ENCODE measurements at regions of chr2 and their contacts with region 1.

Region 1: GRCh38 chr2:73293534-73294171 is at the start of gene EGR4:
- DNase-seq: peak; percentile 94
- ATAC-seq: peak; percentile 95
- H3K4me3 Mint-ChIP-seq: peak within 1 kb of the TSS; percentile 71
- H3K27ac Mint-ChIP-seq: no peak within 1 kb of the TSS
- H3K4me1 Mint-ChIP-seq: peaks cover 16% of the 10 kb centered on the region
- H3K27me3 Mint-ChIP-seq: peaks cover 88% of the 10 kb centered on the region
- total RNA-seq, gene EGR4: 0.09 to 0.15 TPM

Region 2: GRCh38 chr2:73212448-73213176 is 81.0 kb before region 1 on chr2:
- CTCF ChIA-PET with region 1: interaction called, 23 read pairs
- DNase-seq: peak; percentile 83
- ATAC-seq: peak; percentile 76
- H3K4me3 Mint-ChIP-seq: peak overlapping the region; percentile 89
- H3K27ac Mint-ChIP-seq: no peak overlapping the region
- H3K4me1 Mint-ChIP-seq: peaks cover 30% of the 10 kb centered on the region
- H3K27me3 Mint-ChIP-seq: peaks cover 2% of the 10 kb centered on the region

Region 3: DNA sequence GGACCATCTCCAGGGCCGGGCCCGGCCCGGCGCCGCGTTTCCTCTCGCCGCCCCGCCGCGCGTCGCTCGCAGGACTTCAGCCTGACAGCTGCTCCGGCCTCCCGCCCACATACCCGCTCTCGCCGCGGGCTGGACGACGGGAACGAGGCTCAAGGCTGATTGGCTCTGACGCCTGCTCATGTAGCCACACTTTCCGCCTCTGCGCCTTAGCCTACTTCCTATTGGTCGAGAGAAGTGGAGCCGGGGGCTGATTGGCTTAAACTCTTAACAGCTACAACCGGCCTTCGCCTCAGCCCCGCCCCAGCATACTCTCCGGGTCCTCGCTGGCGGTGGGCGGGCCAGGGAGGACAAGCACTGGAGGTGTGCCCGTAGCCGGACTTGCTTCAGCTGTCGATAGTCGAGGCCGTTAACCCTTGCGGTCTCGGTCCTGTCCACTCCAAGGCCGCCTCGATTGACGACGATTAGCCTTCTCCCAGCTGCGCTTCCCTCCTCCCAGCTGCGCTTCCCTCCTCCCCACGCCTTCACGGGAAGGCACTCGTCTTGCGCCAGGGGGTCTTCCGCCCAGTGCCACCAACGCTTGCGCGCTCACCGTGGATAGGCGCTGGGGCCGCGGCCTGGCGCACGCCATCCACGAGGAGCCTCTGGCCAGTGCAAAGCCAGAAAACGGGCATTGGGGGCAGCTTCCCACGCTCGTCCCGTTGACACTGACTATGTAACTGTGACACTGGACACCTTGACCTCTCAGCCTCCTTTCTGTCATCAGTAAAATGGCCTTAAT is 60.3 kb before region 1 on chr2 and contains the start of gene PRADC1:
- CTCF ChIA-PET with region 1: interaction called, 56 read pairs
- DNase-seq: peak; percentile 99
- ATAC-seq: peak; percentile 91
- H3K4me3 Mint-ChIP-seq: peak within 1 kb of the TSS; percentile 88
- H3K27ac Mint-ChIP-seq: peak within 1 kb of the TSS; percentile 89
- H3K4me1 Mint-ChIP-seq: peaks cover 34% of the 10 kb centered on the region
- H3K27me3 Mint-ChIP-seq: no peaks in the 10 kb centered on the region
- total RNA-seq, gene PRADC1: 13.7 to 14.7 TPM

Region 4: DNA sequence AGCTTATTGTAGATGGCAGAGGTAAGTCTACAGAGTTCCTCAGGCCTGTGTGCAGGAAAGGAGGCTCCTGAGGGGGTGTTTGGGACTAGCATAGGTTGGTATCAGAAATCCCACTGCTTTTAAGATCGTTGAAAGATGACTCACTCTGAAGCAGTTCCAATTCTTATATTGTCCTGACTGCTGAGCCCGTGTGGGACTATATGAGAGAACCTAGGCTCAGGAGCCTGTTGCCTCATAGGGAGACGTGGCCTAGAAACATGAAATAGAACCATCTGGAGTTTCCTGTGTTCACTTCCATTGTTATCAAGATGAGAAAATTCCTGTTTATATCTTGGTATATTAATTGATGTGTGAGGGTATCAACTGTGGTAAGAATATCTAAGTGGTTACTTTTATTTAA is 53.9 kb before region 1 on chr2:
- CTCF ChIA-PET with region 1: interaction called, 56 read pairs
- DNase-seq: no peak
- ATAC-seq: no peak
- H3K4me3 Mint-ChIP-seq: no peak overlapping the region
- H3K27ac Mint-ChIP-seq: no peak overlapping the region
- H3K4me1 Mint-ChIP-seq: peaks cover 61% of the 10 kb centered on the region
- H3K27me3 Mint-ChIP-seq: no peaks in the 10 kb centered on the region

Region 5: DNA sequence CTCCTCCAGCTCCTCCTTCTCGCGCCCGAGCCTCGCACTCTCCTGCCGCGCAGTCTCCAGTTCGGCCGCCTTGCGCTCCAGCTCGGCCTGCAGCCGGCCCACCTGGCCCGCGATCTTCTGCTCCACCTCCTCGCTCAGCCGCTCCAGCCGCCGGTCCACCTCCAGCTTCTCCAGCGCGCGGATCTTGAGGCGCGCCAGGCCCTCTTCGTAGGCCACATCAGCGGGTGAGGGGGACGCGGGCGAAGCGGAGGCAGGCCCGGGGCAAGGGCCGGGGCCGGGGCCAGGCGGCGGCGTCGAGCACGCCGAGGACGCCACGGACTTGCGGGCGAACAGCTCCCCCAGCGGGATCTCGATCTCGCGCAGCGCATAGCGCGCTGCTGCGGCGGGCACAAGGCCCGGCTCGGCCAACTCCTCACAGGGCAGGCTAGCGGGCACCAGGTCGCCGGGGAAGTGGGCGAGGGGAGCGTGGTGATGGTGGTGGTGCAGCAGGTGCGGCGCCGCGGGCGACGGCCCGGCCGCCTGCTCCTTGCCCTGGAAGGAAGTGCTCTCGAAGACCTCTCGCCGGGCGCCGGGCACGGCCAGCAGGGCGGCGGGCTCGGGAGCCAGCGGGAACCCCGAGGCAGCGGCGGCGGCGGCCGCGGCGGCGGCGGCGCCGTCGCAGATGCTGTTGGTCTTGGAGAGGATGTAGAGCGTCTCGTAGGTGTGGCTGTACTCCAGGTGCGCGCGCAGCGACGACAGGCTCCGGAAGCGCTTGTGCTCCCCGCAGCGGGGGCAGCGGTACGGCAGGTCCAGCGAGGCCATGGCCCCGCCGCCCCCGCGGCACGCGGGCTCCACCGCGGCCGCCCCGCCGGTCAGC is 24.6 kb before region 1 on chr2:
- CTCF ChIA-PET with region 1: interaction called, 12 read pairs
- DNase-seq: peak; percentile 90
- ATAC-seq: peak; percentile 98
- H3K4me3 Mint-ChIP-seq: peak overlapping the region; percentile 42
- H3K27ac Mint-ChIP-seq: no peak overlapping the region
- H3K4me1 Mint-ChIP-seq: peaks cover 29% of the 10 kb centered on the region
- H3K27me3 Mint-ChIP-seq: no peaks in the 10 kb centered on the region

Region 6: GRCh38 chr2:73279852-73280251 is 13.8 kb before region 1 on chr2:
- CTCF ChIA-PET with region 1: interaction called, 21 read pairs
- DNase-seq: no peak
- ATAC-seq: no peak
- H3K4me3 Mint-ChIP-seq: no peak overlapping the region
- H3K27ac Mint-ChIP-seq: no peak overlapping the region
- H3K4me1 Mint-ChIP-seq: peaks cover 18% of the 10 kb centered on the region
- H3K27me3 Mint-ChIP-seq: no peaks in the 10 kb centered on the region

Region 7: GRCh38 chr2:73418343-73418742 is 124.7 kb after region 1 on chr2:
- CTCF ChIA-PET with region 1: no interaction called
- DNase-seq: no peak
- ATAC-seq: no peak
- H3K4me3 Mint-ChIP-seq: no peak overlapping the region
- H3K27ac Mint-ChIP-seq: no peak overlapping the region
- H3K4me1 Mint-ChIP-seq: peaks cover 7% of the 10 kb centered on the region
- H3K27me3 Mint-ChIP-seq: no peaks in the 10 kb centered on the region

Region 8: DNA sequence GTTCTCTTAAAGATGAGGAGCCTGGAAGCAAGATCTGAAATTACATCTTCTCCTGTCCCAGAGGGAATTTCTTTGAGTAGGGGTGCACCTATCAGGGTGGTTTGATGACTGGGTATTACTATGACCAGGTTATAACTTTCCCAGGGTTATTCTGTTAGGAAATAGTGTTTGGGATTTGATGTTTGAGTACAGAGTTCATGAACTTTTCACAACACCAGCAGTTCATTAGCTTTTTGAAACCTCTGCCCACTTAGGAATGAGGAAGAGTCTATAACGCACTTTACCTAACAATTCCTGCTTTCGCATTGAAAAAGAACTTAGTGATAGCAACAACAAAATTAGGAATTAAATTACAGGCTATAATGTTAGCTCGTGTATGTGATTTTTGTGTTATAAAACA is 150.5 kb after region 1 on chr2:
- CTCF ChIA-PET with region 1: no interaction called
- DNase-seq: no peak
- ATAC-seq: no peak
- H3K4me3 Mint-ChIP-seq: no peak overlapping the region
- H3K27ac Mint-ChIP-seq: no peak overlapping the region
- H3K4me1 Mint-ChIP-seq: no peaks in the 10 kb centered on the region
- H3K27me3 Mint-ChIP-seq: no peaks in the 10 kb centered on the region

Measured in activated CD8-positive, alpha-beta memory T cell treated with anti-CD3 and anti-CD28 coated beads, Interleukin-2, amount 10 ng/mL, durations not matched to agents 7 days and 5 days (primary cell).